Ovary (tissue), 10 donors: ENCODE measurements at regions of chr19 and their contacts with region 1.

Region 1: DNA sequence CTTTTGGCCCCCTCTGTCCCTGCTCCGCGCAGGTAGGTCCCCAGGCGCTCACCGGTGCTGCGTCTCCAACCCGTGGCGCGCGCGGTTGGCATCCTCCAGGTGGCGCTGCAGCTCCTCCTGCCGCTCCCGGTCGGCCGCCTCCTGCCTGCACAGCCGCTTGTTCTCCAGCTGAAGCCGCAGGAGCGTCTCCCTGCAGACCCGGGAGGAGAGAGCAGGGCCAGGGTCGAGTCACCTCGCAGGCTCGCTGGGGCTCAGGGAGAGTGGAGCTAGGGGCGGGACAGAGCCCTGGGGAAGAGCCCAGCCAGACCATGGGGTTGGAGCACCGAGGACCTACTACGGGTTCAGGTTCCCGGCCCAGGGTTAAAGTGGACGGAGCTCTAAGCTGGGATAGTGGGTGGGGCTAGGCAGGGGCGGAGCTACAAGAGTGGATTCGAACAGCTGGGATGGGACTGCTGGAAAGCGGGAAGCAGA is 9.3 kb downstream of the HOOK2 start:
- DNase-seq: peak; percentile 69 to 88 (median 86)
- H3K4me3 ChIP-seq: peak overlapping the region; percentile 15
- H3K27ac ChIP-seq: no peak overlapping the region
- H3K4me1 ChIP-seq: no peaks in the 10 kb centered on the region
- H3K27me3 ChIP-seq: no peaks in the 10 kb centered on the region
- CTCF ChIP-seq: peak; percentile 73 to 98 (median 95)
- EP300 ChIP-seq: no peak
- POLR2A ChIP-seq: no peak

Region 2: GRCh38 chr19:12681074-12681951 is 84.8 kb before region 1 on chr19 and contains the start of gene DHPS:
- intact Hi-C with region 1: no loop called
- DNase-seq: peak; percentile 87 to 94 (median 91)
- H3K4me3 ChIP-seq: peak within 1 kb of the TSS; percentile 96
- H3K27ac ChIP-seq: peak within 1 kb of the TSS; percentile 81 to 96
- H3K4me1 ChIP-seq: no peaks in the 10 kb centered on the region
- H3K27me3 ChIP-seq: no peaks in the 10 kb centered on the region
- CTCF ChIP-seq: no peak
- EP300 ChIP-seq: no peak
- POLR2A ChIP-seq: peak; percentile 55
- total RNA-seq, gene DHPS: 63.7 to 147 (median 89.7) TPM

Region 3: GRCh38 chr19:12796146-12797071 is 30.3 kb after region 1 on chr19:
- intact Hi-C with region 1: loop called (anchors 5 kb)
- DNase-seq: peak; percentile 73 to 83 (median 81)
- H3K4me3 ChIP-seq: no peak overlapping the region
- H3K27ac ChIP-seq: peak overlapping the region in 1 of 2 donors; percentile 42
- H3K4me1 ChIP-seq: peaks cover 4% of the 10 kb centered on the region
- H3K27me3 ChIP-seq: no peaks in the 10 kb centered on the region
- CTCF ChIP-seq: peak; percentile 89 to 96 (median 94)
- EP300 ChIP-seq: no peak
- POLR2A ChIP-seq: peak; percentile 21

Region 4: DNA sequence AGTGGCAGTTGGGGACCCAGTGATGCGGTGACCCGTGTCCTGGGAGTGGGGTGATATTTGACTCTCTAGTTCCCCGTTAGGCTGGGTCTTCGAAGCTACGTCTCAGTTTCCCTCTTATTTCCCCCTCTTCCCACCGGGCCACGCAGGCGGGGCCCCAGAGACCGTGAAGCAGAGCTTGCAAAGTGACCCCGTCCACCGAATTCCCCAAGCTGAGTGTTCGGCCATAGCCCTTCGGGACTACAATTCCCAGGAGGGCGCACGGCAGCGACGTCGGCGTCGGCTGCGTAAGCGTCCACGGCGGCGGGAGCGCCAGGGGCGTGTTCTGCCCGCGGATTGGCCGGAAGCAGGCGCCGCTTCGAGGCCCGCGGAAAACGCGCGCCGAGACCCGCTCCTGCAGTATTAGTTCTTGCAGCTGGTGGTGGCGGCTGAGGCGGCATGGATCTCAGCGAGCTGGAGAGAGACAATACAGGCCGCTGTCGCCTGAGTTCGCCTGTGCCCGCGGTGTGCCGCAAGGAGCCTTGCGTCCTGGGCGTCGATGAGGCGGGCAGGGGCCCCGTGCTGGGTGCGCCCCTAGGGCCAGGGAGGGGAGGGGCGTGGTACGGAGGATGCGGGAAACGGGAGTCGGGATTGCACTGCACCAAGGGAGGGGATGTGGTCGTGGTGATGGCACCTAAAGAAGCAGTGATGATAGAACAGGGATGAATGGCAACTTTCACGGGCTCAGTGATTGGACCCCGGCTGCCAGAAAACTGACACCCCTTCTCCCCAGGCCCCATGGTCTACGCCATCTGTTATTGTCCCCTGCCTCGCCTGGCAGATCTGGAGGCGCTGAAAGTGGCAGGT is 40.4 kb after region 1 on chr19 and contains the start of gene RNASEH2A:
- intact Hi-C with region 1: loop called (anchors 5 kb)
- DNase-seq: peak; percentile 83 to 93 (median 88)
- H3K4me3 ChIP-seq: peak within 1 kb of the TSS; percentile 48
- H3K27ac ChIP-seq: peak within 1 kb of the TSS in 1 of 2 donors; percentile 17
- H3K4me1 ChIP-seq: peaks cover 8% of the 10 kb centered on the region
- H3K27me3 ChIP-seq: no peaks in the 10 kb centered on the region
- CTCF ChIP-seq: peak in 1 of 3 donors; percentile 10
- EP300 ChIP-seq: no peak
- POLR2A ChIP-seq: no peak
- total RNA-seq, gene RNASEH2A: 1.2 to 12.2 (median 7.7) TPM

Region 5: GRCh38 chr19:12847159-12848139 is 81.4 kb after region 1 on chr19:
- intact Hi-C with region 1: loop called (anchors 5 kb)
- DNase-seq: peak; percentile 76 to 92 (median 87)
- H3K4me3 ChIP-seq: no peak overlapping the region
- H3K27ac ChIP-seq: no peak overlapping the region
- H3K4me1 ChIP-seq: no peaks in the 10 kb centered on the region
- H3K27me3 ChIP-seq: no peaks in the 10 kb centered on the region
- CTCF ChIP-seq: peak; percentile 87 to 99 (median 99)
- EP300 ChIP-seq: no peak
- POLR2A ChIP-seq: no peak